IMR-90 (cell line): ENCODE measurements at regions of chr1 and their contacts with region 1.

Region 1: DNA sequence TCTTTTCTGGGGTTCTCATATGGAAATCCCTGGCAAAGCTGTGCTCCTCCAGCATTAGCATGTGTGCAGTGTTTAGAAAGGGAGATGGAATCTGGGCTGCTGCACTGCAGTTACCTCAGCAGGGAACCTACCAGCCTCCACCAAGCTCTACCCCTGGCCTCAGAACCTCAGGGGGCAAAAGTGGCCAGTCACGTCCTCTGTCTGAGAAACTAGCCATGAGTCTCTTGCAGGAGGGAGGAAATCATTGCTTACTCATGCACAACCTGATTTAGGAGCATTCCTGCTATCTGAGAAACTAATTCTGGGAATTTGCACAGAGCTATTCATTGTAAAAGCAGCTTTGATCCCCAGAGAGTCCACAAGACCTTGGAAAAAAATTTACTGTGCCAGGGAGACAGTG is 80.6 kb upstream of the IPO9 start:
- DNase-seq: peak; percentile 97
- ATAC-seq: peak; percentile 82
- H3K4me3 ChIP-seq: no peak overlapping the region
- H3K27ac ChIP-seq: peak overlapping the region; percentile 64
- H3K4me1 ChIP-seq: peaks cover 40% of the 10 kb centered on the region
- H3K27me3 ChIP-seq: no peaks in the 10 kb centered on the region
- CTCF ChIP-seq: no peak
- POLR2A ChIP-seq: no peak
- RAD21 ChIP-seq: no peak

Region 2: DNA sequence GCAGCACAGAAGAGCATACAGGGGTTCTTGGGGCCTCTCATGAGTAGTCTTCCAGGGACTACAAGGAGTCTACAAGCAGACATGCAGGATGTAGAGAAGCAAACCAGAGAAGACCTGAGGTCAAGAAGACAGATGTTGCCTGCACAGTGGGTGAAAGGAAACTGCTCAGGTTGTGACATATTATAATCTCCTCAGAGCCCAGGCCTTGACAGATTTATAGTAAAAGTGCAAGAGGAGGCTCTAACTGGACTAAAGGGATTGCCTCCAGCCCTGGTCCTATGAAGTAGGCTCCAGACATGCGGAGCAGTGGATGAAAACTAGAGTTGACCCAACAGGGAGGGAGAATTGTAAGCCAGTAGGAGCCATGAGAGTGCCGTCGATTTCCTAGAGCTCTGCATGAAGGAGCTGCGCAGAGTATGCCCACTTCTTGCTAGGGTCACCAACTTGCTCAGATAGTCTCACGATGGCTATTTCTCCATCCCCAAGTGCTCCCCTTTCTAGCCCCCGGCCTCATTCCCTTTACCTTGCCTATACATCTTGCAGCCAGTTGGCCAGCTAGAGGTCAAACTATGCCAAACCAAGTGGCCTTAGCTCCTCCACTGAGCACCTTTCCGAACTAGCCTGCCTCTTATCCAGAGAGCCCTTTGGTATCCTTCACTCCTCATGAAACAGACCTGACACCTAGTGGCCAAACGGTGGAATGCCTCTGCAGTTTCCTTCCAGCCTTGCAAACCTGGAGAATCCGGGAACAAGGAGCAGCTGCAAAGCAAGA is 44.4 kb after region 1 on chr1:
- CTCF ChIA-PET with region 1: interaction called, 7 read pairs
- POLR2A ChIA-PET with region 1: no interaction called
- dilution Hi-C with region 1: no loop called
- in situ Hi-C with region 1: no loop called
- intact Hi-C with region 1: loop called (anchors 5 kb)
- DNase-seq: peak; percentile 85
- ATAC-seq: peak; percentile 84
- H3K4me3 ChIP-seq: no peak overlapping the region
- H3K27ac ChIP-seq: peak overlapping the region; percentile 69
- H3K4me1 ChIP-seq: peaks cover 32% of the 10 kb centered on the region
- H3K27me3 ChIP-seq: no peaks in the 10 kb centered on the region
- CTCF ChIP-seq: peak; percentile 97
- POLR2A ChIP-seq: peak; percentile 35; the same call in 1 of the 2 replicates
- RAD21 ChIP-seq: peak; percentile 99

Region 3: GRCh38 chr1:201828820-201829774 is 80.8 kb after region 1 on chr1 and contains the start of gene IPO9:
- CTCF ChIA-PET with region 1: no interaction called
- POLR2A ChIA-PET with region 1: no interaction called
- dilution Hi-C with region 1: no loop called
- in situ Hi-C with region 1: no loop called
- intact Hi-C with region 1: no loop called
- DNase-seq: peak; percentile 91
- ATAC-seq: peak; percentile 88
- H3K4me3 ChIP-seq: peak within 1 kb of the TSS; percentile 95
- H3K27ac ChIP-seq: peak within 1 kb of the TSS; percentile 100
- H3K4me1 ChIP-seq: peaks cover 3% of the 10 kb centered on the region
- H3K27me3 ChIP-seq: no peaks in the 10 kb centered on the region
- CTCF ChIP-seq: peak; percentile 96
- POLR2A ChIP-seq: peak; percentile 87
- RAD21 ChIP-seq: peak; percentile 52
- total RNA-seq, gene IPO9: 13.9 and 14.0 TPM in 2 replicates